CD4-positive, alpha-beta T cell (primary cell): ENCODE measurements at regions of chr3 and their contacts with region 1.

Region 1: GRCh38 chr3:143847787-143848631 is at the start of gene SLC9A9:
- DNase-seq: peak in 12 of 14 experiments; percentile 1 to 68 (median 15)
- ATAC-seq: peak; percentile 84
- H3K4me3 ChIP-seq: peak within 1 kb of the TSS; percentile 71
- H3K4me3 Mint-ChIP-seq: peak within 1 kb of the TSS; percentile 99
- H3K27ac ChIP-seq: peak within 1 kb of the TSS; percentile 6 to 65
- H3K27ac Mint-ChIP-seq: peak within 1 kb of the TSS; percentile 91
- H3K4me1 ChIP-seq: peaks cover 10% of the 10 kb centered on the region
- H3K4me1 Mint-ChIP-seq: peaks cover 71% of the 10 kb centered on the region
- H3K27me3 ChIP-seq: no peaks in the 10 kb centered on the region
- H3K27me3 Mint-ChIP-seq: no peaks in the 10 kb centered on the region
- CTCF ChIP-seq: no peak
- total RNA-seq, gene SLC9A9: 12.2 TPM

Region 2: DNA sequence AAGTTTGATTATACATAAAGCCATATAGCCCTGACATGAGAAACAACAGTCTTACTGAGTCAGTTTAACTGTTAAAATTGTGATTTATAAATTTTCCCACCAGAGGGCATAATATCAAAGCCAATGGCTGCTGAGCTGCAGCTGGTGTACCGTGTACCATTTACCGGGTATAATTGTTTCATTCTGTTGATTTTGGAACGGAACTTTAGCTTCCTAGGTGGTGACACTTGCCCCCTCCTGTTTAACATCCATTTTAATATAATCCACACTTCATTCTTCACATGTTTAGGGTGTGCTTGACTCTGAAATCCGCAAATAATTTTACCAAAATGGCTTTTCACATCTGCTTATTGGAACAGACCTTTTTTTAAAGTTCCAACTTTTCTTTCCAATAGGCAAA is 72.5 kb before region 1 on chr3:
- CTCF ChIA-PET with region 1: no interaction called
- POLR2A ChIA-PET with region 1: no interaction called
- intact Hi-C with region 1: loop called in 1 of 2 experiments (anchors 1 kb)
- DNase-seq: peak in 5 of 14 experiments; percentile 3 to 67 (median 58)
- ATAC-seq: peak; percentile 83
- H3K4me3 ChIP-seq: no peak overlapping the region
- H3K4me3 Mint-ChIP-seq: peak overlapping the region; percentile 11
- H3K27ac ChIP-seq: no peak overlapping the region
- H3K27ac Mint-ChIP-seq: no peak overlapping the region
- H3K4me1 ChIP-seq: no peaks in the 10 kb centered on the region
- H3K4me1 Mint-ChIP-seq: peaks cover 7% of the 10 kb centered on the region
- H3K27me3 ChIP-seq: no peaks in the 10 kb centered on the region
- H3K27me3 Mint-ChIP-seq: no peaks in the 10 kb centered on the region
- CTCF ChIP-seq: peak; percentile 76

Region 3: GRCh38 chr3:143825513-143825912 is 22.5 kb before region 1 on chr3:
- CTCF ChIA-PET with region 1: no interaction called
- POLR2A ChIA-PET with region 1: interaction called, 5 read pairs
- intact Hi-C with region 1: loop called in 1 of 2 experiments (anchors 1 kb)
- DNase-seq: peak in 5 of 14 experiments; percentile 7 to 83 (median 68)
- ATAC-seq: peak; percentile 90
- H3K4me3 ChIP-seq: no peak overlapping the region
- H3K4me3 Mint-ChIP-seq: no peak overlapping the region
- H3K27ac ChIP-seq: no peak overlapping the region
- H3K27ac Mint-ChIP-seq: peak overlapping the region; percentile 50
- H3K4me1 ChIP-seq: peaks cover 24% of the 10 kb centered on the region
- H3K4me1 Mint-ChIP-seq: peaks cover 54% of the 10 kb centered on the region
- H3K27me3 ChIP-seq: no peaks in the 10 kb centered on the region
- H3K27me3 Mint-ChIP-seq: no peaks in the 10 kb centered on the region
- CTCF ChIP-seq: no peak